GM13976 (cell line): ENCODE measurements at regions of chr2 and their contacts with region 1.

Region 1: DNA sequence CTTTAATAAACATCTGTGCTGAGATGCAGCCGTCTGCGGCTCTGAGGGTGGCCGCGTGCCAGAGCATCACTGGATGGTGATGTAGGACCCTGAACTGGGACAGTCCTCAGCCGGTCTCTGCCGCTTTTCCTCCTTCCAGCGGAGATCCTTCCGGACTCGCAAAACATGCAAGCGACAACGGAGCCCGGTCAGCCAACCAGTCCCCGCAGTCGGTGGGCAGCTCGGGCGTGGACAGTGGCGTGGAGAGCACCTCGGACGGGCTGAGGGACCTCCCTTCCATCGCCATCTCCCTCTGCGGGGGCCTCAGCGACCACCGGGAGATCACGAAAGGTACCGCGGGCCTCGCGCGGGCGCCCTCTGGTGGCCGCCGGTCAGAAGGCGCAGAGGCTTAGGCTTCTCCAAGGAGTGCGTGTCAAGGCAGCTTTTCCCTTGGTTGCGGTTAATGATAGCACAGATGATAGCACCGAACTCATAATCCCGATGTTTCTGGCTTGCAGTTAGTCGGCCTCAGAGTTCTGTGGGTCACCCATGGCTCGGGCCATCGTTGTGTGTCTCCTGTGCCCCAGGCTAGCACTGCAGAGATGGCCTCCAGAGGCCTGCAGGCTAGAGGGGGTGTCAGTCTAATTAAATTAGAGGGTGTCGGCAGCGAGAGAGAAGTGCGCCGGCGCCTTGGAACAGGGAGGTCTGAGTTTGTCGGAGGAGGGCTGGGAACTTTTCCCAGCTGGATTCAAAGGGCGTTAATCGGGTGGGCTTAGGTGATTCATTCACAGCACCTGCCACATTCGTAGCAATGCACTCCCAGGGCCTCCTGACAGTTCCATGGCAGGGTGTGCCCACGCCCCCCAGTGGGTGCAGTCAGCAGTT is 38.5 kb downstream of the LPIN1 start:
- DNase-seq: peak; percentile 84
- CTCF ChIP-seq: peak; percentile 91

Region 2: GRCh38 chr2:11688222-11689069 is 96.5 kb before region 1 on chr2:
- in situ Hi-C with region 1: loop called (anchors 10 kb)
- DNase-seq: peak; percentile 85
- CTCF ChIP-seq: peak; percentile 64